HepG2 (cell line): ENCODE measurements at regions of chr12 and their contacts with region 1.

Region 1: DNA sequence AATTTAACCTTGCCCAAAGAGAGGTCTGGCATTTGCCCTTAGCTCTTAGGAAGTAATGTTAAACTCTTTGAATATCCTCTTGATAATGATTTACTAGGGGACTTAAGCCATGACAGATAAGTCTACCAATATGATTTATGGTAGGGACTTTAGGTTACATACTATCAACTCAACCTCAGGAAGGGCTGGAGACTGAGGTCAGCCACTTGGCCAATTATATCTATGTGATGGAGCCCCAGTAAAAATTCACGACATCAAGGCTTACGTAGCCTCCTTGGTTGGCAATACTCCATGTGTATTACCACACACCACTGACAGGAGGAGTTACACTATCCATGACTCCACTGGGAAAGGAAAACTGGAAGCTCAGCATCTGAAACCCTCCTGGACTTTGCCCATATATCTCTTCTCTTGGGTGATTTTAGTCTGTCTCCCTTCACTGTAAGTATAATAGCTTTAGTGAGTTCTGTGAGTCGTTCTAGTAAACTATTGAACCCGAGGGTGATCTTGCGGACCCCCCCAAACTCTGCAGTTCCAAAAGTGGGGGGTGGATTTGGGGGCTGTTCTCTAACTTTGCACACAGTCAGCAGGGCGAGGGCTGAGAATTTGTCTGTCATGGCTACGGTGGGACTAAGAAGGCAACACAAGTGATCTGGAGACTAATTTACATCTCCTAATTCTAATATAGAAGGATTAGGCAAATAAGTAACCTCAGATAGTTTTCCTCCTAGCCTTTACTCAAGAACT is 62.3 kb downstream of the R3HDM2 start:
- DNase-seq: peak; percentile 90
- ATAC-seq: peak; percentile 93
- H3K4me3 ChIP-seq: peak overlapping the region; percentile 0 to 35 (median 29); a peak in 2 of 6 replicates
- H3K27ac ChIP-seq: peak overlapping the region; percentile 69
- H3K4me1 ChIP-seq: peaks cover 43% of the 10 kb centered on the region
- H3K27me3 ChIP-seq: no peaks in the 10 kb centered on the region
- CTCF ChIP-seq: peak; percentile 57
- EP300 ChIP-seq: peak in 1 of 2 experiments; percentile 12; a peak in 1 of 4 replicates
- POLR2A ChIP-seq: no peak
- RAD21 ChIP-seq: no peak

Region 2: DNA sequence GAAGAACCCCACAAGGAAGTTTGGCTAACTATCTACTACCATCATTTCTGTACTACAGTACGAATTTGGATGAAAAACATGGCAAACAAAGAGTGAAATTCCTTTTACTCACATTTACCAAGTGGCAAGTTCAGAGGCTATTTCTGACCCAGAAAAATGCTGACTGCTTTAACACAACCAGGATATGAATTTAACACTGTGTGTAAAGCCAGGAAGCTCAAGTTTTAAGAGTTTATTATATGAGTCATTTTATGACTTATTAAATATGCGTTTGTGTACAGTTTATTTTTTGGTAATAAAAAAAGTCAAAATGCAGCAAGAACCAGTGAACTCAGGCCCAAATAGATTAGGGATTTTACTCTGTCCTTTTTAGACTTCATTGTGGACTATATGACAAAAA is 59.1 kb before region 1 on chr12:
- CTCF ChIA-PET with region 1: no interaction called
- POLR2A ChIA-PET with region 1: no interaction called
- in situ Hi-C with region 1: no loop called
- intact Hi-C with region 1: loop called (anchors 10 kb)
- DNase-seq: no peak
- ATAC-seq: no peak
- H3K4me3 ChIP-seq: no peak overlapping the region
- H3K27ac ChIP-seq: no peak overlapping the region
- H3K4me1 ChIP-seq: no peaks in the 10 kb centered on the region
- H3K27me3 ChIP-seq: no peaks in the 10 kb centered on the region
- CTCF ChIP-seq: no peak
- EP300 ChIP-seq: no peak
- POLR2A ChIP-seq: no peak
- RAD21 ChIP-seq: no peak

Region 3: DNA sequence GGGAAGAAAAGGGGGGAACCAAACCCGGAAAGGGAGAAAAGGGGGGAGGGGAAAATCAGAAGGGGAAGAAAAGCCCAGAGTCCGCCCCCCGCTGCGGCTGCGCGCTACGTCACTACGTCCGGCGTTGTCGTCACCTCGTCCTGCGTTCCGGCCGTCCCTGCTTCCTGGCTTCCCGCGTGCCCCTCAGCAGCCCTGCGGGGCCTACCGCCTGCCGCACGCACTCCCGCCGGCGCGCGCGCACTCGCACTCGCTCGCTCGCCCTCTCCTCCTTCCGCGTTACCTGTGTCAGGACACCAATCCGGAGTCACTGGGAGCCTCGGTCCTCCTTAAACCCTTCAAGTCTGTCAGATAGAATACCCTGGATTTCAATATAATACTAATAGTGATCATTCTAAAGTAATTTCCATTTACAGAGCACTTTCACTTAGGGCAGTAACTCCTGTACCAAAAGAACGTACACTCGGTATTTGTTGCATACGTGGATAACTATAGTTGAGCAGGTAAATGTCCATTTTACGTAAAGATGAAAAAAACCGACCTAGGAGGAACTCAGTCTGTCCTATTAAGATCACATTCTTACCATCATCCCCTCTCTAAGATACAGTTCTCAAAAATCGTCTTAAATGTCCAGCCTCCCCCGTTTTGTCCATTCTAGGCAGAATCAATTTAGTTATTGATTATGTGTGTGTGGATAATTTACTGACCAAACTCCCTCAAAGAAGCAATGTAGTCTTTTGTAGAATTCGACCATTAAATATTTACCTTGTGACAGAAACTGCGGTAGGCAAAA is 62.6 kb after region 1 on chr12 and contains the start of gene R3HDM2:
- CTCF ChIA-PET with region 1: no interaction called
- POLR2A ChIA-PET with region 1: interaction called, 13 read pairs
- in situ Hi-C with region 1: no loop called
- intact Hi-C with region 1: no loop called
- DNase-seq: peak; percentile 89
- ATAC-seq: peak; percentile 81
- H3K4me3 ChIP-seq: peak within 1 kb of the TSS; percentile 63 to 77 (median 73)
- H3K27ac ChIP-seq: peak within 1 kb of the TSS; percentile 88
- H3K4me1 ChIP-seq: peaks cover 51% of the 10 kb centered on the region
- H3K27me3 ChIP-seq: no peaks in the 10 kb centered on the region; a peak in 1 of 5 replicates
- CTCF ChIP-seq: peak; percentile 10; the same call in 1 of the 2 replicates
- EP300 ChIP-seq: peak in 1 of 2 experiments; percentile 18; a peak in 1 of 4 replicates
- POLR2A ChIP-seq: peak; percentile 79 to 88
- RAD21 ChIP-seq: no peak
- total RNA-seq, gene R3HDM2: 8.3 and 11.1 TPM in 2 replicates